Prostate gland (tissue), 2 donors: ENCODE measurements at regions of chr5 and their contacts with region 1.

Region 1: DNA sequence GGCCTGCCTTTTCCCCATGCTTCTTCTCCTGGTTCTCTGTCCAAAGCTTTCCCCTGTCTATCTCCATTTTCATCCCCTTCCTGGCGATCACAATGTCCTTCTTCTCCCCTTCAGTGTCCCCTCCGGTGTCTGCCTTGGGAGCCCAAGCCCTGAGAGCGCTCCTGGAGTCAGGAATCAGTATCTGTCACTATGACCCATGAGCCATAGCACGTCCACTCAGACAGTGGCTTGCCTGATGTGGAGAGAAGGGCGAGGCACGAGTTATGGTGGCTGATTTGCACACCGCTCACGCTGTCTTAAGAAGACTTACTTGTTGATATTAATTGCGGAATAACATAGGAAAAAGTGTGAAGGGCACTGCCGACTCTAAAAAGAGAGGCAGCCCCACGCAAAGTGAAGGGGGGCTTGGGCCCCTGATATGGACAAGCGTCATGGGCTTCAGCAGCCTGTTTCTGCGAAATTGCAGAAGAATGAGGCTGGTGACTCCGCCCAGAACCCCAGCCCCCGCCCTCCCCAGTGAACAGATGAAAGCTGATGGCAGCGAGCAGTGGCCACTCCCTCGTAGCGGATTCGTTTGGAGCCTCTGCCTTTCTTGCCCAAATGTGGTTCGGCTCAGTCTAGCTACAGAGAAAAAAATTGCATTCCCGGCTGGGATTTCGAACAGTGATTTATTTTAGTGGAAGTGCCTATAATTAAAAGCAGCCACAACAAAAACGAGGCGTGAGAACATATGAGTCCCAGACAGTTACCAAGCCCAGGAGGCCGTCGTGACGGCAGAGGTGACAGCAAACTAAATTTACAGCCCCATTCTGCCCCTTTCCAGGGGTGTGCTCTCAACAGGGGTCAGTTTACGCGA is 149.8 kb downstream of the ICE1 start:
- DNase-seq: no peak
- H3K4me3 ChIP-seq: no peak overlapping the region
- H3K27ac ChIP-seq: peak overlapping the region; percentile 30
- H3K4me1 ChIP-seq: no peaks in the 10 kb centered on the region
- H3K27me3 ChIP-seq: no peaks in the 10 kb centered on the region
- CTCF ChIP-seq: no peak
- POLR2A ChIP-seq: no peak

Region 2: DNA sequence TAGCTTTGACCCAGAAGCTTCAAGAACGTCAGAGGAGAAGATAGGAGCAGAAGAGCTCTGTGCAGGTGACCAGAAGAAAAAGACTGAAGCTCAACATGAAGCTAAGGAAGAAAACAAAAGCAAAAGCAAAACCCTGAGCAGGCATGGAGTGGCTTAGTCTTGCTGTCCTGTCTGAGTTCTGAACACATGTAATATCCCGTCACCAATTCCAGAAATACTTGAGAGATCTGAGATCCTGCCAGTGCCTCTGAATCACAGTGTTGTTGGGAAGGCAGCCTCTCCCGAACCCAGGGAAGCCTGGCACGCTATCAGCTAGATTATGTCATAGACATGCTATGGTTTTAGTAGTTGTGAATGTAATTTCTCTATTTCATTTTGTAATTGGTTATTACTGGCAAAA is 86.0 kb after region 1 on chr5:
- intact Hi-C with region 1: loop called (anchors 10 kb)
- DNase-seq: no peak
- H3K4me3 ChIP-seq: no peak overlapping the region
- H3K27ac ChIP-seq: no peak overlapping the region
- H3K4me1 ChIP-seq: no peaks in the 10 kb centered on the region
- H3K27me3 ChIP-seq: no peaks in the 10 kb centered on the region
- CTCF ChIP-seq: no peak
- POLR2A ChIP-seq: no peak